ENCODE measurements at regions of chr5 and their contacts with region 1.

Region 1: DNA sequence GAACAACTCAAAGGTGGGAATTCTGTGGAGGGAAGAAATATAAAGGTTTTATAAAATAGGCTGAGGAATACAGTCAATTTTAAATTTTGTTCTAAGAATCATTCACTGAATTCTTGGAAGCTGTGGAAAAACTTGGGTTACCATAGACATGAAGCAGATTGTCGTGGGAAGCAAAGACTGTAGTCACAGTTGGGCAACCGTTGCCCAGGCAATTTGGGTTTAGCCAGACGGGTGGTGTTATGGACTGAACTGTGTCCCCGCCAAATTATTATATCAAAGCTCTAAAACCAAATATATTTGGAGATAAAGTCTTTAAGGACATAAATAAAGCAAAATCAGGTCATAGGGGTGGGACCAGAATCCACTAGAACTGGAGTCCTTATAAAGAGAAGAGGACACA is 463.7 kb upstream of the CTNND2 start:
- DNase-seq: no peak
- ATAC-seq: no peak
- H3K4me3 ChIP-seq: no peak overlapping the region
- H3K27ac ChIP-seq: no peak overlapping the region
- H3K4me1 ChIP-seq: no peaks in the 10 kb centered on the region
- H3K27me3 ChIP-seq: no peaks in the 10 kb centered on the region
- CTCF ChIP-seq: no peak

Region 2: GRCh38 chr5:12392246-12392645 is 24.3 kb after region 1 on chr5:
- intact Hi-C with region 1: loop called in 1 of 10 experiments (anchors 2 kb)
- DNase-seq: no peak
- ATAC-seq: no peak
- H3K4me3 ChIP-seq: no peak overlapping the region
- H3K27ac ChIP-seq: no peak overlapping the region
- H3K4me1 ChIP-seq: no peaks in the 10 kb centered on the region
- H3K27me3 ChIP-seq: no peaks in the 10 kb centered on the region
- CTCF ChIP-seq: no peak